ENCODE measurements at regions of chr3 and their contacts with region 1.

Region 1: DNA sequence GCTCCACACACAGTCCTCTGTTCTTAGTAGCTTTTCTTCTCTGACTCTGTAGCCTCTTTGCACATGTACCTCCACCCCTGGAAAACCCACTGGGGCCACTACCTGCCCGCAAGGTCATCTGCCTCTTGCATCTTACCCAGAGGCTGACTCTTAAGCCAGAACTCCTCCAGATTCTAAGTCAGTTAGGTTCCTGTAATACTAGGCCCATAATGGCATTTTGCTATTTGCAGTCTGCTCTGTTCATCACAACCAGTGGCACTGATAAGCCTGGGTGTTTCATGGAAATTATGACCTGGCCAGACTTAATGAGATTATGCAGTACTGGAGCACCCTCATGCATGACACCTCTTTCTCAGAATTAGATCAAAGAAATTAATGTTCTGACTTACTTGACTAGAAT is 31.7 kb upstream of the ATG7 start:
- DNase-seq: no peak
- H3K4me3 ChIP-seq: no peak overlapping the region
- H3K27ac ChIP-seq: no peak overlapping the region
- H3K4me1 ChIP-seq: peaks cover 0 to 8% (median 0%) of the 10 kb centered on the region in 4 donors
- H3K27me3 ChIP-seq: no peaks in the 10 kb centered on the region
- CTCF ChIP-seq: no peak

Region 2: DNA sequence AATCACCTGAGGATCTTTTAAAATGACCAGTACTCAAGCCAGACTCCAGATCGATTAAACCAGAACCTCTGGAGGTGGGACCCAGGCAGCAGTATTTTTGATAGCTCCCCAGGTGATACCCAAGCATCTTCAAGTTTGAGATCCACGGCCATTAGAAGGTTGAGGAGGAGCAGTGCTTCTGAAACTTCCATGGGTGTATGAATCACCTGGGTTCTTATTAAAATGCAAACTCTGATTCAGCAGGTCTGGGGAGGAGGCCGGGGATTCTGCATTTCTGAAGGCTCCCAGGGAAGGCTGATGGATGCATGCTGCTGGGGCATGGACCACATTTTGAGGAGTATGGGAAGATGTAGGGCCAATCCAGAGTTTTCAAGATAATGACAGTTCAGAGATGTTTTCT is 87.1 kb after region 1 on chr3:
- intact Hi-C with region 1: loop called (anchors 2 kb)
- DNase-seq: no peak
- H3K4me3 ChIP-seq: no peak overlapping the region
- H3K27ac ChIP-seq: no peak overlapping the region
- H3K4me1 ChIP-seq: peaks cover 0 to 13% (median 0%) of the 10 kb centered on the region in 4 donors
- H3K27me3 ChIP-seq: no peaks in the 10 kb centered on the region
- CTCF ChIP-seq: no peak